ENCODE measurements at regions of chr17 and their contacts with region 1.

Region 1: DNA sequence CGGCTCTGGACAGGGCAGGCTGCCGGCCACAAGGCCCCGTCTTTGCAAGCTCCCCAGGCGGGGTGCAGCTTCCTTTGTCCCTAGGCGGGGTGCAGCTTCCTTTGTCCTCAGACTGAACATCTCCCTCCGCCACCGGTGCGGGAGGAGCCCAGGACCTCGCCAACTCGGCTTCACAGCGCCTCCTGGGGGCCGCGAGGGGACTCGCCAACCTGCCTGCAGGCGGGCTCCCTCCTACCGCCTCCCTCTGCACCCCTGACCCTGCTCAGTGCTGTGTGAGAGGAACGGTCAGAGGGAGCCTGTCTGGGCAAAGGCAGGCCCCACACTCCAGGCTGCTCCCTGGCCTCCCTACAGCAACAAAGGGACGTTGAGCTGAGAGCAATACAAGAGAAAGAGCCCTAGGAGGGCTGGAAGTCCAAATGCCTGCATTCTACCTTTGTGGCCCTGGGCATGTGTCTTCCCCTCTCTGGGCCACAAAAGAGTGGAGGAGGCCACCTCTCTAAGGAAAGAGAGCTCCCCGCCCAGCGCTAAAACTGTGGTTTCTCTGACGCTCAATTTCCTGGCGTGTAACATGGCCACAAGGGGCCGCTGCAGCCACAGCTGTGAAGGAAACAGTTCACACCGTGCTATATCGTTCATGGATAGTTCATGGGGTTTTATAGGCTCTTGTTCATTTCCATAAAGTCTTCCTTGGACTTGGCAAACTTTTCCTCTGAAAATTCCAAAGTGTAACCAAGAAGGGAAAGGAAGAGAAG is 20.9 kb upstream of the KRT19 start:
- DNase-seq: peak; percentile 74
- H3K4me3 ChIP-seq: peak overlapping the region in 2 of 3 experiments; percentile 20 to 23
- H3K27ac ChIP-seq: peak overlapping the region; percentile 74
- H3K4me1 ChIP-seq: peaks cover 19% of the 10 kb centered on the region
- H3K27me3 ChIP-seq: no peaks in the 10 kb centered on the region
- CTCF ChIP-seq: peak; percentile 68 to 95
- POLR2A ChIP-seq: peak; percentile 39

Region 2: GRCh38 chr17:40903129-40904065 is 645.6 kb before region 1 on chr17:
- CTCF ChIA-PET with region 1: interaction called, 22 read pairs
- POLR2A ChIA-PET with region 1: no interaction called
- dilution Hi-C with region 1: no loop called
- intact Hi-C with region 1: no loop called
- DNase-seq: no peak
- H3K4me3 ChIP-seq: no peak overlapping the region
- H3K27ac ChIP-seq: no peak overlapping the region
- H3K4me1 ChIP-seq: no peaks in the 10 kb centered on the region
- H3K27me3 ChIP-seq: peaks cover 0 to 4% of the 10 kb centered on the region in 2 experiments
- CTCF ChIP-seq: no peak
- POLR2A ChIP-seq: no peak

Region 3: GRCh38 chr17:41451154-41451728 is 97.8 kb before region 1 on chr17:
- CTCF ChIA-PET with region 1: interaction called, 22 read pairs
- POLR2A ChIA-PET with region 1: no interaction called
- dilution Hi-C with region 1: no loop called
- intact Hi-C with region 1: no loop called
- DNase-seq: no peak
- H3K4me3 ChIP-seq: no peak overlapping the region
- H3K27ac ChIP-seq: no peak overlapping the region
- H3K4me1 ChIP-seq: no peaks in the 10 kb centered on the region
- H3K27me3 ChIP-seq: peaks cover 0 to 5% of the 10 kb centered on the region in 2 experiments
- CTCF ChIP-seq: no peak
- POLR2A ChIP-seq: no peak

Region 4: GRCh38 chr17:41510251-41511065 is 38.6 kb before region 1 on chr17:
- CTCF ChIA-PET with region 1: interaction called, 33 read pairs
- POLR2A ChIA-PET with region 1: no interaction called
- dilution Hi-C with region 1: no loop called
- intact Hi-C with region 1: no loop called
- DNase-seq: no peak
- H3K4me3 ChIP-seq: no peak overlapping the region
- H3K27ac ChIP-seq: no peak overlapping the region
- H3K4me1 ChIP-seq: no peaks in the 10 kb centered on the region
- H3K27me3 ChIP-seq: no peaks in the 10 kb centered on the region
- CTCF ChIP-seq: no peak
- POLR2A ChIP-seq: no peak

Region 5: DNA sequence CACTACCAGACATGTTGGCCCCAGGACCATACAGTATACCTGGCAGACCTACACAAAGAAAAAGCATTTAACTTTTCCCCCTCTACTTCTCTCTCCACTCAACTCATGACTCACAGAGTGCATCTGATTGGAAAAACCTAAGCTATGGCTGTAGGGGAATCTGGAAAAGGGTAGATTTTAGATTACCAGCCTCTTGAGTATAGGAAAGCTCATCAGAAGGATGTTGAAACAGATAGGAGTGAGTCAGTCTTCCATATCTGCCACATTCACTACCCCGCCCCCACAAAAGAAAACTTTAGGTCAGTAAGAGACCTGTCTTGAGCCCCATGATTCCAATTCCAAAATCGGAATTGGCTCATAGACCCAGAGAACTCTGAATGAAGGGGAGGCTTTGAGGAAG is 10.5 kb after region 1 on chr17:
- CTCF ChIA-PET with region 1: interaction called, 34 read pairs
- POLR2A ChIA-PET with region 1: no interaction called
- dilution Hi-C with region 1: no loop called
- intact Hi-C with region 1: no loop called
- DNase-seq: no peak
- H3K4me3 ChIP-seq: no peak overlapping the region
- H3K27ac ChIP-seq: no peak overlapping the region
- H3K4me1 ChIP-seq: peaks cover 10% of the 10 kb centered on the region
- H3K27me3 ChIP-seq: peaks cover 24 to 38% of the 10 kb centered on the region in 2 experiments
- CTCF ChIP-seq: no peak
- POLR2A ChIP-seq: no peak

Region 6: GRCh38 chr17:41648411-41649195 is 99.6 kb after region 1 on chr17:
- CTCF ChIA-PET with region 1: interaction called, 319 read pairs
- POLR2A ChIA-PET with region 1: no interaction called
- dilution Hi-C with region 1: no loop called
- intact Hi-C with region 1: loop called (anchors 1 kb)
- DNase-seq: peak; percentile 78
- H3K4me3 ChIP-seq: peak overlapping the region in 1 of 3 experiments; percentile 25
- H3K27ac ChIP-seq: no peak overlapping the region
- H3K4me1 ChIP-seq: peaks cover 7% of the 10 kb centered on the region
- H3K27me3 ChIP-seq: no peaks in the 10 kb centered on the region
- CTCF ChIP-seq: peak; percentile 96 to 98
- POLR2A ChIP-seq: no peak

Measured in endothelial cell of umbilical vein (primary cell).